ENCODE measurements at regions of chr5 and their contacts with region 1.

Region 1: DNA sequence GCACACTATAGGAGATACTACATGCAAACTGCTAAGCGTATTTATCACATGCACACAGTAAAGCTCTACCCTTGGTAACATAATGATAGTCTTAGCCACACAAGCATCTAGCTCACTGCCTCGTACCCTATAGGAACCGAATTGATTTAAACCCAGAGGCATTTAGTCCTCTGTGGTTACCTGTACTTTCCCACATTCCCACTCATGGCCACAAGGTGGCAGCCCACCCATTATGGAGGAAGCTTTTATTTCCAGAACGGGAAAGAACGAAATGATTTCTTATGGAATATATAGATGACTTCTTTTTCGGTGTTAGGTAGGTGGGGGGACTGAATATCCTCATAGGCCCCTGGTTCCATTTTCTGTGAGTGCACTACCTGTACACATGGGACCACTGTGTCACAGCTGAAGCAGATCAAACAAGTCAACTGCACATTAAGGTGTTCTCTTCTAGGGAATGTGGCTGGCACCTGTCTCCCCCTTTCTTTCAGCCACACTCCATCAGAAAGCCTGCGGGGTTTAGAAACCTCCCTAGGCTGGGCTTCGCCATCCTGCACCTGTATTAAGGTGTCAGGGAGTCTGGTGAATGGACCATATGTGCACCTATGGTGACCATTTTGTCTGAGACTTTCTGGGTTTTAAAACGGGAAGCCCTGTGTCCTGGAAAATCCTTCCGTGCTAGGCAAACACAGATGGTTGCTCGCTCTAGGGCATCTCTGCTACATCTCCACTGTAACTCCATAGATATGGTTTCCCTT is 313.2 kb downstream of the SLIT3 start:
- DNase-seq: peak; percentile 33
- H3K4me3 ChIP-seq: no peak overlapping the region
- H3K27ac ChIP-seq: no peak overlapping the region
- H3K27me3 ChIP-seq: peaks cover 3% of the 10 kb centered on the region
- CTCF ChIP-seq: peak; percentile 92

Region 2: GRCh38 chr5:168679515-168679920 is 308.2 kb before region 1 on chr5:
- CTCF ChIA-PET with region 1: interaction called, 12 read pairs
- POLR2A ChIA-PET with region 1: no interaction called
- DNase-seq: peak; percentile 52
- H3K4me3 ChIP-seq: no peak overlapping the region
- H3K27ac ChIP-seq: no peak overlapping the region
- H3K27me3 ChIP-seq: no peaks in the 10 kb centered on the region
- CTCF ChIP-seq: peak; percentile 93

Region 3: GRCh38 chr5:168941901-168942300 is 45.8 kb before region 1 on chr5:
- CTCF ChIA-PET with region 1: interaction called, 12 read pairs
- POLR2A ChIA-PET with region 1: no interaction called
- DNase-seq: no peak
- H3K4me3 ChIP-seq: no peak overlapping the region
- H3K27ac ChIP-seq: no peak overlapping the region
- H3K27me3 ChIP-seq: no peaks in the 10 kb centered on the region
- CTCF ChIP-seq: no peak

Region 4: DNA sequence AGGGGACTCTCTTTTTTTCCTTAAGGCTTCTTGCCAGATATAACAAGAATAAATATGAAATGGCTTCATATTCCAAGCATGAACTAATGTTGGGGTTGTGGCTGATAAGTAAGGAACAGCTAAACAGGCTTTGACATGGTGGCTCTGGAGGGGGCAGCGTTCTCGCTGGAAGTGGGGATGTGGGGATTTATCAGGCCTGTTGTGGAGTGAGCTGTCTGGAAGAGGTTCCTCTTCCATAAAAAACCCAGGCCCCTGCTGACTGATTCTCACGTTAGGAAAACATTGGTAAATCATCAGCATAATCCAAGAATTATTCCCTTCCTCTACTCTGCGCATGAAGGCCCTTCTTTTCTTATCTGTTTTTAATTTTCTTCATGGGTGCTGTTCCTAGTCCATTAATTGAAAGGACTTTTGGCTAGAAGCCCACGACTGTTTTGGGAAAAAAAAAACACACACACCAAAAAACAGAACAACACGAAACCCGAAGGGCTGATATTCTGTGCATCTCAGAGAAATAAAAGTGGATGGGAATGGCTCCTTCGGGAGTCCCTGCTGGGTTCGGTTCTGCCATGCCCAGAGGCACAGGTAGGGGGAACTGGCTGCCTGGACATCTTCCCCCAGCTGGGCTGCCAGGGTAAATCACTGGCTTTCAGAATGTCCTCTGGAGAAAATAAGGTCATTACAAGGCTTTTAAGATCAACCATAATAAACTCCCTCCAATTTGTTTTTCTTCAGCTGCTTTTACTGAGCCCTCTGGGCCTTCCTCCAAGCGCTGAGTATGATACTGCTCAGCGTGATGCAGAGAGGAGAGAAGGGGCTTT is 16.2 kb after region 1 on chr5:
- CTCF ChIA-PET with region 1: interaction called, 20 read pairs
- POLR2A ChIA-PET with region 1: no interaction called
- DNase-seq: no peak
- H3K4me3 ChIP-seq: no peak overlapping the region
- H3K27ac ChIP-seq: no peak overlapping the region
- H3K27me3 ChIP-seq: no peaks in the 10 kb centered on the region
- CTCF ChIP-seq: no peak

Region 5: DNA sequence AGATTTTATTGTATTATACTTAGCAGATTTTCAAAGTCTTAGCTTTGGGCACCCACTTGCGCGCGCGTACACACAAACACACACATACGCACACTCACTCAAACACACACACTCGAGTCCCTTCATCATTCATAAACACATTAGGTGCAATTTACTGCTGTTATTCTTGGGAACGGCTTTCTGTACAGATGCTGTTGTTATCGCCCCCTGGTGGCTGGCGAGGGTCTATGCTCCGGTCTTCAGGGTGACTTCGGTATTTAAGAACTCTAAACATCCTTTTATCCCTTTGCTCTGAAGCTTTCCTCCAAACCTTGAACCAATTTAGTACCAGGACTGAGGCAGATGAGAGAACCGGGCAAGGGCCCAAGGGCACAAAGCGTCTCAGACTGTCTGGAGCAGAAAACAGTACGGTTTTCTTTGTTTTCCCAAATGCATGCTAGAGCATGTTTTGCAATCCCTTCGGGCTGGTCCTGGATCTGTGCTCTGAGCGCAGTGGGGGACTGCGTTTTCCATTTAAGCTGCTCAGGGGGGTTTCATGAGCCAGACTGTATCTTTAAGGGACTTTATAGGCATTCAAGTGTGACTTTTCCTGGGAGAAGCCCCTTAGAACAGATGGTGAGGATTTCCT is 314.9 kb after region 1 on chr5:
- CTCF ChIA-PET with region 1: interaction called, 26 read pairs
- POLR2A ChIA-PET with region 1: no interaction called
- DNase-seq: peak; percentile 55
- H3K4me3 ChIP-seq: no peak overlapping the region
- H3K27ac ChIP-seq: no peak overlapping the region
- H3K27me3 ChIP-seq: peaks cover 26% of the 10 kb centered on the region
- CTCF ChIP-seq: peak; percentile 93

Region 6: DNA sequence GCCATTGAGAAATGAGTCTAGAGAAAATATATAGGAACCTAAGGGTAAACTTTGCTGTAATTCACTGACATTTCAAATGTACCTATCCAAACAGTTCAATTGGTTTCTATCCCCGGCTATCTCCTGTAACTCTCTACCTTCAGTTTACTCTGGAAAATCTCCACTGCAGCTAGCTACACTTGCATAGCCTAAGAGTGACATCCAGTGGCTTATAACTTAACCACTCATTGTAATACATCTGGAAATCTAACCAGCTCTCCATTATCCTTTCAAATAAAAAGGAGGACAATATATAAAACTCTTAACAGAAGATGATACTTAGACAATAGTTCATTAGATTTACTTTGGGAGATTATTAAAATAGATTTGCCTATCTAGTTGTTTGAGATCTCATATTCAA is 560.6 kb after region 1 on chr5:
- CTCF ChIA-PET with region 1: interaction called, 35 read pairs
- POLR2A ChIA-PET with region 1: no interaction called
- DNase-seq: no peak
- H3K4me3 ChIP-seq: no peak overlapping the region
- H3K27ac ChIP-seq: no peak overlapping the region
- H3K27me3 ChIP-seq: no peaks in the 10 kb centered on the region
- CTCF ChIP-seq: peak; percentile 35

Region 7: GRCh38 chr5:169583424-169584204 is 595.9 kb after region 1 on chr5 and contains the start of gene SPDL1:
- CTCF ChIA-PET with region 1: interaction called, 93 read pairs
- POLR2A ChIA-PET with region 1: no interaction called
- DNase-seq: peak; percentile 93
- H3K4me3 ChIP-seq: peak within 1 kb of the TSS; percentile 86
- H3K27ac ChIP-seq: peak within 1 kb of the TSS; percentile 77
- H3K27me3 ChIP-seq: no peaks in the 10 kb centered on the region
- CTCF ChIP-seq: no peak
- polyA plus RNA-seq, gene SPDL1: 14.0 and 22.7 TPM in 2 replicates